ENCODE measurements at regions of chr1 and their contacts with region 1.

Region 1: DNA sequence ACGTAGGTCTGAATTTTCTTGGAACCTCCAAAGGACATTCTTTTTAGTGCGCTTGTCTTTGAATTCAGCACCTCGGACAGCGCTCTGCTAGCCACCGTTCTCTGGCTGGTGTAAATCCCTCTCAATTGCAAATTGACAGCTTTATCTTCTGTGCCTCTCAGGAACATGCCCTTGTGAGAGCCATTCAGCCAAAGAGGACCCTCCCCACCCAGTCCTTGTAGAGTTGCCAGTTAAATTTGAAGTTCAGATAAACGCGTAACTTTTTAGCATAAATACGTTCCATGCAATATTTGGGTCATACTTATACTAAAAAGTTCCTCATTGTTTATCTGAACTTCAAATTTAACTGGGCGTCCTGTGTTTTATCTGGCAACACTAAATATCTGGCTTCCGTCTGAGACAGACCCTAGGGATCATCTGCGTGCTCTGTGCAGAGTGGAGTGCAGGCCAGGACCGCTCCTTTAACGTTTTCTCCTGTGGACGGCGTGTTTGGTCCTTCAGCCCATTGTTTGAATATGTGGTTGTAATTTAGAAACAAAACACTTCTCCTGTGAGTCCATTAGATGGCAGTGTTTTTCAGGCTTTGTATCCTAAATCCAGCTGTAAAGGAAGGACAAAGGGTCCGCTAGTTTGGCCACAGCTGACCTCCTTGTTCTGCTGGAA is 7.0 kb downstream of the KCNAB2 start:
- DNase-seq: peak; percentile 41 to 85
- H3K4me3 ChIP-seq: peak overlapping the region in 2 of 4 experiments; percentile 10 to 46; a peak in 3 of 8 replicates
- H3K27ac ChIP-seq: no peak overlapping the region
- H3K4me1 ChIP-seq: peaks cover 2 to 6% (median 4%) of the 10 kb centered on the region in 4 experiments; a peak in 4 of 7 replicates
- H3K27me3 ChIP-seq: no peaks in the 10 kb centered on the region; a peak in 1 of 7 replicates
- CTCF ChIP-seq: peak in 2 of 3 experiments; percentile 66 to 79; a peak in 3 of 4 replicates
- EP300 ChIP-seq: no peak
- POLR2A ChIP-seq: no peak
- RAD21 ChIP-seq: peak; percentile 82 to 88

Region 2: GRCh38 chr1:5908461-5909370 is 144.0 kb before region 1 on chr1:
- CTCF ChIA-PET with region 1: no interaction called
- POLR2A ChIA-PET with region 1: no interaction called
- DNase-seq: peak in 1 of 2 experiments; percentile 42
- H3K4me3 ChIP-seq: no peak overlapping the region
- H3K27ac ChIP-seq: no peak overlapping the region
- H3K4me1 ChIP-seq: 0 out of 7 replicates have a peak, but pooled peaks cover 0 to 3% (median 0%) of the 10 kb centered on the region in 4 experiments
- H3K27me3 ChIP-seq: no peaks in the 10 kb centered on the region
- CTCF ChIP-seq: no peak
- EP300 ChIP-seq: no peak
- POLR2A ChIP-seq: no peak
- RAD21 ChIP-seq: no peak

Region 3: DNA sequence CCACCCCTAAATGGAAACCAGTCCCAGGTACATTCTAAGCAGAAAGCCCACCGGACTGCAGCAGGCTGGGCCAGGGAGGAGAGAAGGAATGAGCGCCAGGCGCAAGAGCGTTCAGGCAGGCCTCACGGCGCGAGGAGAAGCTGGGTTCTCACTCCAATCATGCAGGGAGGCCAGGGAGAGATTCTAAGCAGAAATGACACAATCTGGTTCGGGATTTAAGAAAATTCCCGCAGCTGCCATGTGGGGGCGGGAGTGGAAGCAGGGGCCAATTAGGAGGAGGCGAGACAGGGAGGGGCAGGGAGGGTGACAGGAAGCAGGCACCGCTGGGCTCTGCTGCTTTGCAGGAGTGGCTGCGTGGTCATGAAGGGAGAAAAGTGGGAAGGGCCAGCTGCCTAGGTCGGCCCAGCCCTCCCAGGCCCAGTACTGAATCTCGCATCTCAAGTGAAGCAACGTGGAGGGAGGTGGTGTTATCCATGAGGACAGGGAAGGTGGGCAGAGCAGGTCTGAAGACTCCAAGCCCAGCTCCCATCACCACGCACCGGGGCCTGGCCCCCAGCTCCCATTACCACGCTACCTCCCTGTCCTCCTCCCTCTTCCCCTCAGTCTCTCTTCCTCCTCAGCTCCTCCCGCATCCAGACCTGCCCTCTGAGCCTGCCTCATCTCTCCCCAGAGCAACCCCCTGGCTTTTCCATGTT is 72.2 kb before region 1 on chr1:
- CTCF ChIA-PET with region 1: no interaction called
- POLR2A ChIA-PET with region 1: no interaction called
- DNase-seq: peak; percentile 66 to 87
- H3K4me3 ChIP-seq: peak overlapping the region in 1 of 4 experiments; percentile 45; a peak in 3 of 8 replicates
- H3K27ac ChIP-seq: no peak overlapping the region; the same call in 1 of the 2 replicates
- H3K4me1 ChIP-seq: peaks cover 6 to 13% (median 9%) of the 10 kb centered on the region in 4 experiments
- H3K27me3 ChIP-seq: no peaks in the 10 kb centered on the region
- CTCF ChIP-seq: peak; percentile 50 to 65 (median 53)
- EP300 ChIP-seq: no peak
- POLR2A ChIP-seq: peak in 1 of 2 experiments; percentile 73; a peak in 2 of 3 replicates
- RAD21 ChIP-seq: peak in 1 of 2 experiments; percentile 24; a peak in 1 of 4 replicates

Region 4: DNA sequence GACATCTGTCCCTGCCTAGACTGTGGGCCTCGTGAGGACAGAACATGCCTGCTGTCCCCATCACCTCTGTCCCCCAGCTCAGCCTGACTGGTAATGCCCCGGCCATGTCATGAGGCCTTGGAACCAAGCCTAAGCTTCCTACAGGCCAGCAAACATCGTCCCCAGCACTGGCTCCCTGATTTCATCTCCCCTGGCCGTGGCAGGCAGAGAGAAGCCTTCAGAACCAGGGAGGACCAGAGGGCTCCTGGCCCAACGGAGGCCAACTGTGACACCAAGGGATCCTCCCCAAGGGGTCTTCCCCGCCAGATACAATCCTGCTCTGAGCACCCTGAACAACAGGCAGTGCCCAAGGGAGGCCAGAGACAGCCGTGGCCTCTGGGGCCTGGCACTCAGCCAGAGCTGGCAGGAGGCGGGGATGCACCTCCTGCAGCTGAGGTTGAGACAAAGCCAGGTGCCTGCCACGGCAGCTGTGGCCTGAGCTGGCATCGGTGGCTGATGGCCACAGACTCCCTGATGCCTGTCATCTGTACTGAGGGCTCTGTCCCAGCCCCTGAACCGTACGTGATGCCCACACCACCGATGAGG is 50.6 kb before region 1 on chr1:
- CTCF ChIA-PET with region 1: no interaction called
- POLR2A ChIA-PET with region 1: no interaction called
- DNase-seq: no peak
- H3K4me3 ChIP-seq: no peak overlapping the region
- H3K27ac ChIP-seq: no peak overlapping the region
- H3K4me1 ChIP-seq: peaks cover 0 to 6% (median 4%) of the 10 kb centered on the region in 4 experiments; a peak in 4 of 7 replicates
- H3K27me3 ChIP-seq: no peaks in the 10 kb centered on the region
- CTCF ChIP-seq: no peak
- EP300 ChIP-seq: no peak
- POLR2A ChIP-seq: no peak
- RAD21 ChIP-seq: no peak

Region 5: DNA sequence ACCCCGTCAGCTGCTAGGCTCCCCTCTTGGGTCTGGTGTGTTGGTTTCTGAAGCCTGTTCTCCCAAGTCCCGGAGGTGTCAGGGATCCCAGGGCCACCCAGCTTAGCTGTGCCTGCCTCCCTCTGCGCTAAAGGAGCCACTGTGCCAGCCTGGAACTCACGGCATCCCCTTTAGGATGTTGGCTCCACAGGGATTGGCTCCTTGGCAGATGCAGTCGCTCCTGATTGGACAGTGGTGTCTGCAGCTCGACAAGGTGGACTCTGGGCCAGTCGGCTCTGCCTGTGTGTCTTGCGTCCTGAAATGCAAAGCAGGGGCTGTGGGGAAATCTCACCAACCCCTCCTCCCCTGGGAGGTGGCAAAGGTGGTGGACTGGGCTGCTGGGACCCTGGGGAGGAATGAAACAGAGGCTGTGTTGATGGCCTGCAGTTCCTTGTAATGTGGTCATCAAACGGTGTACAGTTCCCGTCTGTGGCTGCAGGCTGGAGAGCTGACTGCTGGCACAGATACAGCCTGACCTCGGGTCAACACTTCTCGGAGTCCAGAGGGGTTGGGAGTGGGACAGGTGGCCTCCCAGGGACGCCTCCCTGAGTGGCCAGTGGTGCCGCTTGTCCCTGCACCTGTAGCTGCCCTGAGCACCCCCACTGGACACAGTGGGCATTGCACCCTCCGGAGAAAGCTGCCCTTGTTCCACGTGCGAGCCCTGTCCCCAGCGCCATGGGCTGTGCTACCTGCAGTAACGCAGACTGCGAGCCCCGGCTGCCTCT is 18.5 kb before region 1 on chr1:
- CTCF ChIA-PET with region 1: interaction called, 22 read pairs
- POLR2A ChIA-PET with region 1: no interaction called
- DNase-seq: peak in 1 of 2 experiments; percentile 95
- H3K4me3 ChIP-seq: peak overlapping the region in 2 of 4 experiments; percentile 6 to 44; a peak in 3 of 8 replicates
- H3K27ac ChIP-seq: no peak overlapping the region
- H3K4me1 ChIP-seq: peaks cover 0 to 13% (median 7%) of the 10 kb centered on the region in 4 experiments; a peak in 5 of 7 replicates
- H3K27me3 ChIP-seq: peaks cover 0 to 5% (median 2%) of the 10 kb centered on the region in 4 experiments; a peak in 4 of 7 replicates
- CTCF ChIP-seq: peak in 2 of 3 experiments; percentile 73 to 77; a peak in 3 of 4 replicates
- EP300 ChIP-seq: no peak
- POLR2A ChIP-seq: no peak
- RAD21 ChIP-seq: peak; percentile 16 to 30; a peak in 1 of 4 replicates

Region 6: GRCh38 chr1:6065093-6065858 is 12.6 kb after region 1 on chr1:
- CTCF ChIA-PET with region 1: interaction called, 23 read pairs
- POLR2A ChIA-PET with region 1: interaction called, 3 read pairs
- DNase-seq: no peak
- H3K4me3 ChIP-seq: no peak overlapping the region
- H3K27ac ChIP-seq: no peak overlapping the region
- H3K4me1 ChIP-seq: no peaks in the 10 kb centered on the region
- H3K27me3 ChIP-seq: no peaks in the 10 kb centered on the region
- CTCF ChIP-seq: no peak
- EP300 ChIP-seq: no peak
- POLR2A ChIP-seq: no peak
- RAD21 ChIP-seq: no peak

Region 7: DNA sequence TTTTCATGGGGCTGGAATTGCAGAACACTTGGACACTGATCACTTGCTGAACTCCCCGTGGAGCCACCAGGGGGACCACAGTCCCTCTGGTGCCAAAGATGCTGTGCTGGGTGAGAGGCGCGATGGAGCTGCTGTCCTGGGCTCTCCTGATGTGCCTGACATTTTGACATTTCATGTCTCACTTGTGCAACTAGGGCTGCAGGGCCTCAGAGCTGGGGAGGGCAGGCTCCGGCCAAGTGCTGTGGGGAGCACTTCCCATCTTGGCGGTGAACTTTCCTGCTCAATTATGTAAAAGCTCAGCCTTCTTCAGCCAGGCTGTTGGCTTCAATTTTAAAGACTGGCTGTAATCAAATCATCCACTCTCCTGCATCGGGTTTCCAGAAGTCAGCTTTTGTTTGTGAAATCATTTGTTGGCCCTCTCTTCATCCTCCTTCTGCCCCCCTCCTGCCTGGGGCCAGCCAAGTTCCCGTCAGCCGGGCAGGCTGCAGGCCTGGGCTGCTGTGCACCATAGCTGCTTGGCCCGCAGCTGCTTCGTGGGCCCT is 29.8 kb after region 1 on chr1:
- CTCF ChIA-PET with region 1: interaction called, 38 read pairs
- POLR2A ChIA-PET with region 1: no interaction called
- DNase-seq: no peak
- H3K4me3 ChIP-seq: no peak overlapping the region
- H3K27ac ChIP-seq: no peak overlapping the region
- H3K4me1 ChIP-seq: peaks cover 0 to 5% (median 2%) of the 10 kb centered on the region in 4 experiments; a peak in 3 of 7 replicates
- H3K27me3 ChIP-seq: 0 out of 7 replicates have a peak, but pooled peaks cover 0 to 2% (median 0%) of the 10 kb centered on the region in 4 experiments
- CTCF ChIP-seq: peak; percentile 44 to 55 (median 55)
- EP300 ChIP-seq: no peak
- POLR2A ChIP-seq: no peak
- RAD21 ChIP-seq: peak; percentile 30 to 46; a peak in 3 of 4 replicates

Region 8: DNA sequence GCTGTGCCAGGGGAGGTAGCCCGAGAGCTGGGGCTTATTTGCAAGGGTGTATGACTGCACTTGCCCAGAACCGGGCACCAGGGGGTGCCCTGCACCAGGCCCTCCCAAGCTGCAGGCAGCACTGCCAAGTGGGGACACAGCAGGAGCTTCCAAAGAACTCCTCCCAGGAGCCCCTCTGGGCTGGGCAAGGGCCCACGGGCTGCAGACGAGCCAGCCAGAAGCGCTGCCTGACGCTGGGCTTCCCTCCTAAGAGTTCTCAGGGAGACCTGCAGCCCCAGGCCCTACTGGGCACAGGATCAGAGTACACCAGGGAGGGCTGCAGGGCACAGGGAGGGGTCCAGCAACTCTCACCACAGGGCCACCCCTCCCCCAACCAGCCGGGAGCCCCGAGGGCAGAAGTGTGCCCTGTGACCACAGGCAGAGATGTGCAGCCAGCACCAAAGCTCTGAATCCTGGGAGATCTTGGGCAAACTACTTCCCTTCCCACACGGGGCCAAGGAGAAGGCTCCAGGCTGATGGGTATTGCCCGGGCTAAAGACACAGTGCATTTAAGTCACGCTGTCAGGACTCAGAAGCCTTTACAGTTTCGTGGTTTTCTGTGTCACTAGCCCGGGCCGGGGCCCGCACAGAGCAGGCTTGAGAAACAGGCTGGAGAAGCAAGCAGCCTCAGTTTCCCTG is 56.4 kb after region 1 on chr1:
- CTCF ChIA-PET with region 1: interaction called, 11 read pairs
- POLR2A ChIA-PET with region 1: no interaction called
- DNase-seq: peak in 1 of 2 experiments; percentile 41
- H3K4me3 ChIP-seq: no peak overlapping the region
- H3K27ac ChIP-seq: no peak overlapping the region
- H3K4me1 ChIP-seq: peaks cover 0 to 4% (median 3%) of the 10 kb centered on the region in 4 experiments; a peak in 2 of 7 replicates
- H3K27me3 ChIP-seq: no peaks in the 10 kb centered on the region; a peak in 1 of 7 replicates
- CTCF ChIP-seq: peak; percentile 61 to 77 (median 68)
- EP300 ChIP-seq: no peak
- POLR2A ChIP-seq: no peak
- RAD21 ChIP-seq: peak; percentile 79 to 83

Region 9: DNA sequence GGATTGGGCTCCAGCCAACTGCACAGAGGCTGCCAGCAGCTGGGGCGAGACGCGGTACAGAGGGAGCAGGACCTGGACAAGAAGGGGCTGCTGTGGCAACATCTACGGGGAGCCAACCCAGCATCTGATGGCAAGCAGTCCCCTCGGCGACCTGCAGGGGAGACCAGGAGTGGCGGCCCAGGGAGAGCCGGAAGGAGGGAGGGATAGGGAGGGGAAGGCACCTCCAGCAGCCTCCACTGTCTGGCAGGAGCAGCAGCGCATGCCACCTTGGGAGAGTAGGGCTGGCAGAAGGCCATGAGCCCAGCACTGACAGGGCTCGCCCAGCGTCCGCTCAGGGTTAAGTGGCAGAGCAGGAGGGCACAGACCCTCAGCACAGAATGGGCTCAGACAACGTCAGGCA is 110.1 kb after region 1 on chr1:
- CTCF ChIA-PET with region 1: interaction called, 15 read pairs
- POLR2A ChIA-PET with region 1: no interaction called
- DNase-seq: no peak
- H3K4me3 ChIP-seq: no peak overlapping the region
- H3K27ac ChIP-seq: no peak overlapping the region
- H3K4me1 ChIP-seq: peaks cover 0 to 8% (median 2%) of the 10 kb centered on the region in 4 experiments; a peak in 4 of 7 replicates
- H3K27me3 ChIP-seq: no peaks in the 10 kb centered on the region; a peak in 1 of 7 replicates
- CTCF ChIP-seq: peak in 2 of 3 experiments; percentile 44 to 50; a peak in 2 of 4 replicates
- EP300 ChIP-seq: no peak
- POLR2A ChIP-seq: no peak
- RAD21 ChIP-seq: peak in 1 of 2 experiments; percentile 44; a peak in 1 of 4 replicates

Region 10: DNA sequence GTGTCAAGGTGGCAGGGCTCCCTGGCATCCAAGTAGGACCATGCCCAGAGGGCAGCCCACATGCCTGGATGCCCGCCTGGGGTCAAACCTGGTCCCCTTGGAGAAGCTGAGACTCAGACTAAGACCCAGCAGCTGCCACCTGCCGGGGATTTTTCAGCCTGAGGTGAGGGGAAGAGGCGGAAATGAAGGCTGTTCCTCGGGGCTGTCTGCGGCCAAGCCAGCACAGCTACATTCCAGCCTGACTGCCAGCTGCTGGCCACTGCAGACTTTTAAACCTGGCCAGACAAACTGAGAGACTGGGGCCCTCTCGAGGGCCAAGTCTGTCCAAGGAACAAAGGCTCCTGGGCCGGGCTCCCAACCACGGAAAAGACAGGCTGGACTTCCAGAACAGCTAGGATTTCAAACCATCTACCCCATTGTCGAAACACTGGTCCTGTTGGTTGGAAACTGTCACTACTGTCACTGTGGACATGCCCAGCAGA is 460.7 kb after region 1 on chr1:
- CTCF ChIA-PET with region 1: no interaction called
- POLR2A ChIA-PET with region 1: no interaction called
- DNase-seq: no peak
- H3K4me3 ChIP-seq: no peak overlapping the region
- H3K27ac ChIP-seq: no peak overlapping the region
- H3K4me1 ChIP-seq: no peaks in the 10 kb centered on the region; a peak in 3 of 7 replicates
- H3K27me3 ChIP-seq: no peaks in the 10 kb centered on the region
- CTCF ChIP-seq: no peak
- EP300 ChIP-seq: no peak
- POLR2A ChIP-seq: no peak
- RAD21 ChIP-seq: no peak

Measured in H1 (cell line).